Caco-2 (cell line): ENCODE measurements at regions of chr19 and their contacts with region 1.

Region 1: DNA sequence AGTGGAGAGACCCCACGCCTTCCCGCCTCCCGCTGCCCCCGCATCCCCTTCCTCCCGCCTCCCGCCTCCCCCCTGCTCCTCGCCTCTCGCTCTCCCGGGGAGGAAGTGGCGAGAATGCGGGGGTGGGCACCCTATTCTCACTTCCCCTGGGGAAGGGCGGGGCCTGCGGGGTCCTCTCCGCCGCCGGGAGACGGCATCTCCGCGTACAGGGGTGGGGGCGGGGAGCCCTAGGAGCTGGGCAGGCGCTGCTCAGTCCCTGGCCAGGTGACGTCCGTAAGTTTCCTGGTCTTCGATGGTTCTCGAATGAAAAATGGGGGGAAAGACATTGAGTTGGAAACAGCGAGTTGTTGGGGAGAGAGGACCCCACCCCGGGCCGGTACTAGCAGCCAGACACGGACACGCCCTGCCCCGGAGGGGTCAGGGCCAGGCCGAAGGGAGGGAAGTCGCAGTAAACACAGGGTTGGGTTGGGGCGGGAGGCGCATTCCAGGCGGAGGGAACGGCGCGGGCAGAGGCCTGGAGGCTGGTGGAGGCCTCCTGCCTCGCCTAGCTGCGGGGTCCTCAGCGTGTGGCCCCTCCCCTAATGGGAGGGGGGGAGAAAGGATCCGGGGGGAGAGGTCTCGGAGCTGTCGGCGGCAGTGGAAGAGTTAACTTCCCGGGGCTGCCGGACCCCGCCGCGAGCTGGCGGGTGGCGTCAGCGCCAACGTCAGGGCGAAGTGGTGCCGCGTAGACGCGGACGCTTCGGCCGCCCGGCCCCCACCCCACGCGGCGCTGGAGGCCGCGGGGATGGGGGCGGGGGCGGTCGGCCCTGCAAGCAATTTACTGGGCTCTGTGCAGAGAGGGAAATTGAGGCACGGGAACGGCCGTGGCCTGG is 10.4 kb upstream of the JUND start:
- DNase-seq: peak; percentile 82 to 90
- H3K4me3 ChIP-seq: peak overlapping the region; percentile 63
- H3K4me3 Mint-ChIP-seq: peak overlapping the region; percentile 71
- H3K27ac Mint-ChIP-seq: peak overlapping the region; percentile 92
- H3K4me1 ChIP-seq: peaks cover 18% of the 10 kb centered on the region
- H3K4me1 Mint-ChIP-seq: peaks cover 7% of the 10 kb centered on the region
- H3K27me3 ChIP-seq: no peaks in the 10 kb centered on the region
- H3K27me3 Mint-ChIP-seq: no peaks in the 10 kb centered on the region
- CTCF ChIP-seq: no peak

Region 2: GRCh38 chr19:18224525-18225354 is 67.1 kb before region 1 on chr19:
- CTCF ChIA-PET with region 1: no interaction called
- POLR2A ChIA-PET with region 1: interaction called, 18 read pairs
- intact Hi-C with region 1: no loop called
- DNase-seq: peak; percentile 97 to 98
- H3K4me3 ChIP-seq: peak overlapping the region; percentile 79
- H3K4me3 Mint-ChIP-seq: peak overlapping the region; percentile 95
- H3K27ac Mint-ChIP-seq: peak overlapping the region; percentile 81
- H3K4me1 ChIP-seq: 0 out of 2 replicates have a peak, but pooled peaks cover 5% of the 10 kb centered on the region
- H3K4me1 Mint-ChIP-seq: peaks cover 10% of the 10 kb centered on the region
- H3K27me3 ChIP-seq: no peaks in the 10 kb centered on the region
- H3K27me3 Mint-ChIP-seq: no peaks in the 10 kb centered on the region
- CTCF ChIP-seq: no peak

Region 3: DNA sequence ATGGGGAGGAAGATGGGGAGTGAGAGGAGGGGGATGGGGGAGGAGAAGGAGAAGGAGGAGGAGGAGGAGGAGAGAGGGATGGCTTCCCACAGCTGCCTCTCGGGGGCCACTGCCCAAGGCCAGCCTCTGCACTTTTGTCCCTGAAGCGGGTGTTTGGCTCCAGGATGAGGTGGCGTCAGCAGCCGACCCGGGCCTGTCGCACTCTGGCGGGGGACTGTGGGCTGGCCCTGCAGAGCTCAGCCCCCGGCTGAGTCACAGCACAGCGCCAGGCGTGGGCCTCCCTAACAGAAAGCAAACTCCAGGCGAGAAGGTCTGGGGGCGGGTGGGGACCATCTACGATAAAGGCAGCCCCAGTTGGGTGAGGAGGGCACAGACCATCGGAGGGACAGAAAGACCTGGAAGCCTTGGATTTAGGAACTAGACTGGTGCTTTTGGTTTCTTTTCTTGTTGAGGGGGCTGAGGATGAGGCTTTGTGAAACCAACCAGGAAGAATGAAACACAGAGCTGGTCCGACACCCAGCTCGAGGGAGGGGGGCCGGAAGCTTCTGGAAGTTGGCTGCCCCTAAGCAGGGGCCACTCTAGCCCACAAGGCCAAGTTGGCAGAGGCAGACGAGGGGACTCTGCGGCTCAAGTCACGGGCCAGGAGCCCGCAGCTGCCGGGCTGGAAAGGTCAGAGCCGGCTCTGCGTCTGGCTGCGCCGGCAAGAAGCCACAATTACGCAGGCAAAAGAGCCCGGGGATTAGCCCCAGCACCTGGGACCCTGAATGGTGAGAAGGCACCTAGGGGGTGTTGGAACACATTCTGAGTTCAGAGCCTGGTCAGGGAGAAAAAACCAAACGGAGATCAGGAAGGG is 12.9 kb after region 1 on chr19:
- CTCF ChIA-PET with region 1: no interaction called
- POLR2A ChIA-PET with region 1: interaction called, 22 read pairs
- intact Hi-C with region 1: no loop called
- DNase-seq: peak; percentile 54 to 65
- H3K4me3 ChIP-seq: no peak overlapping the region
- H3K4me3 Mint-ChIP-seq: peak overlapping the region; percentile 59
- H3K27ac Mint-ChIP-seq: peak overlapping the region; percentile 75
- H3K4me1 ChIP-seq: peaks cover 27% of the 10 kb centered on the region
- H3K4me1 Mint-ChIP-seq: peaks cover 9% of the 10 kb centered on the region
- H3K27me3 ChIP-seq: no peaks in the 10 kb centered on the region
- H3K27me3 Mint-ChIP-seq: no peaks in the 10 kb centered on the region
- CTCF ChIP-seq: no peak

Region 4: GRCh38 chr19:18310118-18310909 is 18.5 kb after region 1 on chr19:
- CTCF ChIA-PET with region 1: no interaction called
- POLR2A ChIA-PET with region 1: interaction called, 15 read pairs
- intact Hi-C with region 1: no loop called
- DNase-seq: peak; percentile 37 to 76
- H3K4me3 ChIP-seq: no peak overlapping the region
- H3K4me3 Mint-ChIP-seq: peak overlapping the region; percentile 2
- H3K27ac Mint-ChIP-seq: peak overlapping the region; percentile 45
- H3K4me1 ChIP-seq: peaks cover 34% of the 10 kb centered on the region
- H3K4me1 Mint-ChIP-seq: no peaks in the 10 kb centered on the region
- H3K27me3 ChIP-seq: no peaks in the 10 kb centered on the region
- H3K27me3 Mint-ChIP-seq: no peaks in the 10 kb centered on the region
- CTCF ChIP-seq: no peak

Region 5: GRCh38 chr19:18322759-18323460 is 31.1 kb after region 1 on chr19 and contains the start of gene LSM4:
- CTCF ChIA-PET with region 1: interaction called, 23 read pairs
- POLR2A ChIA-PET with region 1: interaction called, 32 read pairs
- intact Hi-C with region 1: loop called (anchors 2 kb)
- DNase-seq: peak; percentile 97 to 98
- H3K4me3 ChIP-seq: peak within 1 kb of the TSS; percentile 96
- H3K4me3 Mint-ChIP-seq: peak within 1 kb of the TSS; percentile 92
- H3K27ac Mint-ChIP-seq: peak within 1 kb of the TSS; percentile 97
- H3K4me1 ChIP-seq: peaks cover 32% of the 10 kb centered on the region
- H3K4me1 Mint-ChIP-seq: peaks cover 30% of the 10 kb centered on the region
- H3K27me3 ChIP-seq: no peaks in the 10 kb centered on the region
- H3K27me3 Mint-ChIP-seq: no peaks in the 10 kb centered on the region
- CTCF ChIP-seq: peak in 1 of 2 experiments; percentile 38
- total RNA-seq, gene LSM4: 184 and 186 TPM in 2 replicates